Activated CD4-positive, alpha-beta T cell treated with anti-CD3 and anti-CD28 coated beads, Interleukin-2, amount 10 ng/mL, durations not matched to agents 7 days and 5 days (primary cell): ENCODE measurements at regions of chr7 and their contacts with region 1.

Region 1: GRCh38 chr7:149422129-149422913 is 38.5 kb downstream of the ZNF777 start:
- DNase-seq: peak; percentile 64
- H3K4me3 Mint-ChIP-seq: peak overlapping the region; percentile 62
- H3K27ac Mint-ChIP-seq: peak overlapping the region; percentile 83
- H3K4me1 Mint-ChIP-seq: peaks cover 19% of the 10 kb centered on the region
- H3K27me3 Mint-ChIP-seq: peaks cover 3% of the 10 kb centered on the region

Region 2: GRCh38 chr7:149367483-149368180 is 54.7 kb before region 1 on chr7:
- CTCF ChIA-PET with region 1: no interaction called
- POLR2A ChIA-PET with region 1: no interaction called
- DNase-seq: no peak
- H3K4me3 Mint-ChIP-seq: no peak overlapping the region
- H3K27ac Mint-ChIP-seq: no peak overlapping the region
- H3K4me1 Mint-ChIP-seq: no peaks in the 10 kb centered on the region
- H3K27me3 Mint-ChIP-seq: peaks cover 10% of the 10 kb centered on the region

Region 3: DNA sequence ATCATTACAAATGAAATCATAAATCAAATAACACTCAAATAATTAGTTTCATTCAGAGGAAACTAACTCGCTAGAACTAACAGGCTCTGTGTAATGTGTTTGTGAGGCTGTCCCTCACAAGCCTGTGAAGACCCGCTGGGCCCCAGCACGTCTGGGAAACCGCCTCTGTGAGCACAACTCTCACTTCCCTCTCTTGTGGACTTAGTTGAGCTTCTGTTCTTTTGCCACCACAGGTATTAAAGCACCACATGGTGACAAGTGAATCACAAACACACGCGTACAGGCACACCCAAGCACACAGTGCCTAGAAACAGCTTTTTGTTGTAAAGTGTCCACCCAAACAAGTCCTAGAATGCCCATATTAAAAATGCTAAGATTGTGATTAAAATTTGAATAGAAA is 12.4 kb before region 1 on chr7:
- CTCF ChIA-PET with region 1: interaction called, 10 read pairs
- POLR2A ChIA-PET with region 1: no interaction called
- DNase-seq: no peak
- H3K4me3 Mint-ChIP-seq: no peak overlapping the region
- H3K27ac Mint-ChIP-seq: no peak overlapping the region
- H3K4me1 Mint-ChIP-seq: peaks cover 9% of the 10 kb centered on the region
- H3K27me3 Mint-ChIP-seq: peaks cover 46% of the 10 kb centered on the region

Region 4: DNA sequence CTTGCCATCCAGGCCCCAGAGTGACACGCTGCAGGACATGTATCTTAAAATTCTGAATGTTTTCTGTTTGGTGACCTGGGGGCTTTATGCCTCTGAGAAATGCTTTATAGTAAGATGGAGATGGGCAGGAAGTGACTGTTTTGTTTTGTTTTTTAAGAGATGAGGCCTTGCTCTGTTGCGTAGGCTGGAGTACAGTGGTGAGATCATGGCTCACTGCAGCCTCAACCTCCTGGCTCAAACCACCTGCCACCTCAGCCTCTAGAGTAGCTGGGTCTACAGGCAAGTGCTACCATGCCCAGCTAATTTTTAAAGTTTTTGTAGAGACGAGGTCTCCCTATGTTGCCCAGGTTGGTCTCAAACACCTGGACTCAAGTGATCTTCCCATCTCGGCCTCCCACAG is 17.9 kb after region 1 on chr7:
- CTCF ChIA-PET with region 1: interaction called, 19 read pairs
- POLR2A ChIA-PET with region 1: no interaction called
- DNase-seq: no peak
- H3K4me3 Mint-ChIP-seq: no peak overlapping the region
- H3K27ac Mint-ChIP-seq: peak overlapping the region; percentile 37
- H3K4me1 Mint-ChIP-seq: peaks cover 22% of the 10 kb centered on the region
- H3K27me3 Mint-ChIP-seq: no peaks in the 10 kb centered on the region